ENCODE measurements at regions of chr3 and their contacts with region 1.

Region 1: GRCh38 chr3:138594150-138594934 is at the start of gene CEP70:
- DNase-seq: peak; percentile 94
- H3K4me3 ChIP-seq: peak within 1 kb of the TSS; percentile 76
- H3K27ac ChIP-seq: peak within 1 kb of the TSS; percentile 83
- H3K4me1 ChIP-seq: peaks cover 21% of the 10 kb centered on the region
- CTCF ChIP-seq: peak; percentile 94
- total RNA-seq, gene CEP70: 29.2 and 34.2 TPM in 2 replicates

Region 2: GRCh38 chr3:138068579-138069174 is 525.7 kb before region 1 on chr3:
- CTCF ChIA-PET with region 1: no interaction called
- POLR2A ChIA-PET with region 1: no interaction called
- intact Hi-C with region 1: loop called (anchors 10 kb)
- DNase-seq: peak; percentile 73
- H3K4me3 ChIP-seq: no peak overlapping the region
- H3K27ac ChIP-seq: no peak overlapping the region
- H3K4me1 ChIP-seq: no peaks in the 10 kb centered on the region
- CTCF ChIP-seq: peak; percentile 95

Region 3: DNA sequence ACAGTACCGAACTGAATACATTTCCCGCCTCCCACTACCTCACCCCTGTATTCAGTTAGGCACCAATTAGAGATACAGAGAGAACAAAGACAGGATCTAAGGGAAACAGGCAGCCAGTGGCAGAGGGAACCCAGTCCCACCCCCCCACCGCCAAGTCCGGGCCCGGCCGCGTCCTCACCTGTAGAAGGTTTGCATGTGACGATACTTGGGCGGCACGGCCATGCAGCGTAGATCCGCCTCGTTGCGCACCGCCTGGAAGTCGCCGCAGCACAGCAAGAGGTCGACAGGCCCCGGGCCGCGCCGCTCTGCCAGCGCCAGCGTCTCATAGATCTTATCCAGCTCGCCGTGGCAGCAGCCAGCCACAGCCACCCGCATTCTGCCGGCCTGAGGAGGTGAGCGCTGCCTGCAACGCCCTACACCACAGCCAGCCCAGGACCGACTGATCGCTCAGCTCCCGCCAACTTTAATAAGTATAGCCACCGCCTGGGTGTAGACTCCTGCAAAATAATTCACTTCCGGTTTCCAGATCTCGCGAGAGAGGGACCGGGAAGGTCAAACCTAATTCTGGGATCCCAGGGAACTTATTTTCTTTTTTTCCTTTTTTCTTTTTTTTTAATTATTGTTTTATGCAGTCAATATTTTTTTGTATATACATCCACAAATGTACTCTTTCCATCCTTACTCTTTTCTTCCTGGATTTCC is 419.8 kb before region 1 on chr3 and contains the start of gene DBR1:
- CTCF ChIA-PET with region 1: no interaction called
- POLR2A ChIA-PET with region 1: no interaction called
- intact Hi-C with region 1: loop called (anchors 5 kb)
- DNase-seq: peak; percentile 92
- H3K4me3 ChIP-seq: peak within 1 kb of the TSS; percentile 85
- H3K27ac ChIP-seq: peak within 1 kb of the TSS; percentile 85
- H3K4me1 ChIP-seq: peaks cover 28% of the 10 kb centered on the region
- CTCF ChIP-seq: no peak
- total RNA-seq, gene DBR1: 13.6 and 21.4 TPM in 2 replicates

Region 4: GRCh38 chr3:138479438-138479863 is 114.9 kb before region 1 on chr3:
- CTCF ChIA-PET with region 1: no interaction called
- POLR2A ChIA-PET with region 1: no interaction called
- intact Hi-C with region 1: loop called (anchors 5 kb)
- DNase-seq: peak; percentile 70
- H3K4me3 ChIP-seq: no peak overlapping the region
- H3K27ac ChIP-seq: no peak overlapping the region
- H3K4me1 ChIP-seq: no peaks in the 10 kb centered on the region
- CTCF ChIP-seq: peak; percentile 89

Region 5: GRCh38 chr3:138578141-138578540 is 16.2 kb before region 1 on chr3:
- CTCF ChIA-PET with region 1: interaction called, 3 read pairs
- POLR2A ChIA-PET with region 1: interaction called, 18 read pairs
- intact Hi-C with region 1: no loop called
- DNase-seq: peak; percentile 69
- H3K4me3 ChIP-seq: peak overlapping the region; percentile 11
- H3K27ac ChIP-seq: no peak overlapping the region
- H3K4me1 ChIP-seq: peaks cover 23% of the 10 kb centered on the region
- CTCF ChIP-seq: no peak

Region 6: DNA sequence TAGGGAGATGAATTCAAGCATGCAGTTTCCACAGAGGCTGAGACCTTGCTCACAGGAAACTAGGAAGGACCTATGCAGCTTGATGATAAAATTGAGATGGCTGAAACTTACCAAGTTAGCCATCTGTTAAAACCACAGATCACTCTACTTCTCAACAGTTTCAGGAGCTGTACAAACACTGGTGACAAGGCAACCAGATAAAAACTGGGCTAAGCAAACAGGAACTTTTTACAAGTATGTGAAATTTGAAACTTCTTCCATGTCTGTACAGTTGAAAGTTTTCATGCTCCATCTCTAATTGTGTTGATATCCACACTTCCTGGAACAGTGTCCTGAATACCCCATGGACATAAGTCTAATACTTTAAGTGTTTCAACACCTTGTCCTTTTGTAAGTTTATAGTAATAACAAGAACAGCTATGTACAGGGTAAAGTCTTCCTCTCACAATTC is 92.5 kb after region 1 on chr3:
- CTCF ChIA-PET with region 1: no interaction called
- POLR2A ChIA-PET with region 1: interaction called, 3 read pairs
- intact Hi-C with region 1: loop called (anchors 2 kb)
- DNase-seq: peak; percentile 61
- H3K4me3 ChIP-seq: no peak overlapping the region
- H3K27ac ChIP-seq: peak overlapping the region; percentile 48
- H3K4me1 ChIP-seq: peaks cover 15% of the 10 kb centered on the region
- CTCF ChIP-seq: no peak

Region 7: GRCh38 chr3:138834359-138835212 is 240.2 kb after region 1 on chr3 and contains the start of gene PIK3CB:
- CTCF ChIA-PET with region 1: no interaction called
- POLR2A ChIA-PET with region 1: no interaction called
- intact Hi-C with region 1: loop called (anchors 2 kb)
- DNase-seq: peak; percentile 89
- H3K4me3 ChIP-seq: peak within 1 kb of the TSS; percentile 85
- H3K27ac ChIP-seq: peak within 1 kb of the TSS; percentile 74
- H3K4me1 ChIP-seq: peaks cover 16% of the 10 kb centered on the region
- CTCF ChIP-seq: peak; percentile 71
- total RNA-seq, gene PIK3CB: 7.1 and 8.2 TPM in 2 replicates